ENCODE measurements at regions of chr13 and their contacts with region 1.

Region 1: GRCh38 chr13:73058736-73059459 is at the start of gene KLF5:
- DNase-seq: peak; percentile 99
- H3K4me3 Mint-ChIP-seq: peak within 1 kb of the TSS; percentile 83
- H3K27ac Mint-ChIP-seq: peak within 1 kb of the TSS; percentile 92
- H3K4me1 Mint-ChIP-seq: peaks cover 34% of the 10 kb centered on the region
- H3K27me3 Mint-ChIP-seq: no peaks in the 10 kb centered on the region
- CTCF ChIP-seq: no peak
- total RNA-seq, gene KLF5: 197 and 226 TPM in 2 replicates

Region 2: DNA sequence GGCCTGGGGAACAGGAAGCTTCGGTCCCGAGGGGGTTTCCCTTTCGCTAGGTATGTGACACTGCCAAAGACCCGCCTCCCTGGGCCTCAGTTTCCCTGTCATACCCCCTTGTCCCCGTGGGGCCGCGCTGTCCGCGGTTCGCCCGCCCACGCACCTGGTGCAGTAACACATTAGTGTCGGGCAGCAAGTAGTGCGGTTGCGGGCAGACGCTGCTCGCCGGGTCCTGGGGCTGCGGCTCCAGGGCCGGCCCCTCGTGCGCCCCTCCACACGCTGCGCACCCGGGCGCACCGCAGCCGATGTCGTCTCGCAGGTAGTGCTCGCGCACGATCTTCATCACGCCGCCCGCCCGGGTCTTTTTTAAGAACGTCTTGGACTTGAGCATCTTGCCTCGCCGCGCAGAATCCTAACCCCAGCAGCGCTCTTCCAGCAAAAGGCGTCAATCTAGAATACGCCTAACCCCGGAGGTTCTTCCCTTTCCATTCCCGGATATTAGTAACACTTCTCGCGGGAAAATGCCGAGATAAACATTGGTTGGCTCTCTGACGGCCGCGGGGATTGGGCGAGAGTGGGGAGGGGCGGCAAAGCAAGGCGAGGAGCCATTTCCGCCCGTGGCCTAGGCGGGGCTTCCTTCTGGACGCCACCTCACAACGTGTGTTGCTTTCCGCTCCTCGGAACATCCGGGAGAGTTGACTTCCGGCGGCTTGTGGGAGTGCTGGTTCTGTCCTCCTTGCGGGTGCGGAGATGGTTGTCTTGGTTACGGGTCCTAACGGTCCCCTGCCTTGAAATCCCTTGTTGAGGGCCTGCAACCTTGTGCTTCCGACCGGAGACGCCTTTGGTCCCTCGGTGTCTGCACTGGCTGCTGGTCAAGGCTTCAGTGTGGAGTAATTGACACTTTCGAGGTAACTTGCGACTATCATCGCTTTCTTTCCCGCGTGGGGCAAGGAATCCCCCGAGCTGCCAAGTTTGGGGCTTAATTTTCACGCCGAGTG is 277.2 kb before region 1 on chr13 and contains the starts of genes DIS3 and PIBF1:
- CTCF ChIA-PET with region 1: no interaction called
- POLR2A ChIA-PET with region 1: interaction called, 14 read pairs
- intact Hi-C with region 1: no loop called
- DNase-seq: peak; percentile 99
- H3K4me3 Mint-ChIP-seq: peak within 1 kb of the TSS; percentile 95
- H3K27ac Mint-ChIP-seq: peak within 1 kb of the TSS; percentile 98
- H3K4me1 Mint-ChIP-seq: peaks cover 30% of the 10 kb centered on the region
- H3K27me3 Mint-ChIP-seq: no peaks in the 10 kb centered on the region
- CTCF ChIP-seq: no peak
- total RNA-seq, gene DIS3: 41.3 and 44.4 TPM in 2 replicates
- total RNA-seq, gene PIBF1: 30.4 and 38.4 TPM in 2 replicates

Region 3: DNA sequence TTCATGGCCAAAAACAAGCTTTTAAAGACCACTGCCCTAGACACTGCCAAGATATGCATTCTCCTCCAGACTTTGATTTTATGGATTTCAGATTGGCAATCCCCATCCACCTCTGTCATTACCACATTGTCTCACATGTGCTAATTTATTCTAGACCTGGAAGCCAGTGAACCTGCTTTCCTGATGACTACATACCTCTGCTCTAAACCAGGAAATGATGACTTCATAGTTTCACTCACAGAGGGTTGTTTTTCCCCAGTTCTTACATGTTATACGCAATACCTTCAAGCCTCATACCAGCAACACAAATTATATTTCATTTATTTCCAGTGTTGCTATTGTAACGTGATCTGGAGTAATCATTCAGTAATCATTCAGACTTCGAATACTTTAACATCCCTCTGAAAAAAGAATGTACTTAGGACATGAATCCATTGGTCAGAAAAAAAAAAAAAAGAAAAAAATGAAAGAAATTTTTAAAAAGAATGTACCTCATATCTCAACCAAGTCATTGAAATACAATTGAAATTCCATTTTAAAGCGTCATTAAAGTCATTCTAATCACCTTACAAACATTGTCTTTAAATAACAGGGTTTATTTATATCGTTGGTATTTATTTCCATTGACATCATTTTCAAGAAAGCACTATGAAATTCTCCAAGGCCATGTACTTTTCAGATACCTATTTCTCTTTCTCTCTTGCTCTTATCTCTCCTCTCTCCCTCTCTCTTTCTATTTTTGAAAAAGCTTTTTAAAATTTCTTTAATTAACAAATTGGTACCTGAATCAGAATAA is 33.5 kb before region 1 on chr13:
- CTCF ChIA-PET with region 1: no interaction called
- POLR2A ChIA-PET with region 1: interaction called, 11 read pairs
- intact Hi-C with region 1: no loop called
- DNase-seq: peak; percentile 32
- H3K4me3 Mint-ChIP-seq: no peak overlapping the region
- H3K27ac Mint-ChIP-seq: no peak overlapping the region
- H3K4me1 Mint-ChIP-seq: no peaks in the 10 kb centered on the region
- H3K27me3 Mint-ChIP-seq: no peaks in the 10 kb centered on the region
- CTCF ChIP-seq: no peak

Region 4: DNA sequence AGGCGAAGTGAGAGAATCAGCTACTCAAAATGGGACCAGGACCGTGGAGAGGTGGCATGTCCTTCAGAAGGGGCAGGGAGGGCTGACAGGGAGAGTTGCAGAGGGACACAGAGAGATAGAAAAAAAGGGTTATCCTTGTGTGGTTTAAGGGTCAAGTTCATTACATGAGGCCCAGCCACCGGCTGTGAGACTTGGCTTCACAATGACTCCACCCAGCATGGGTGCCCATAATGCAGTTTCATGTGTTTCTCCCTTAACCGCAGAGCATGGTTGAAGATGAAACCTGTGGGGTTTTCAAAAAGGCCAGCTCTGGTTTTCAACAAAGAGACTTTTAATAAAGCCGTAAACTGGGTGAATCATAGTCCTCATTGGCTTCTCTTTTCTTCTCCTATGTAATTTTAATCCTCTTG is 164.5 kb after region 1 on chr13:
- CTCF ChIA-PET with region 1: interaction called, 5 read pairs
- POLR2A ChIA-PET with region 1: interaction called, 5 read pairs
- intact Hi-C with region 1: loop called (anchors 2 kb)
- DNase-seq: no peak
- H3K4me3 Mint-ChIP-seq: no peak overlapping the region
- H3K27ac Mint-ChIP-seq: peak overlapping the region; percentile 28
- H3K4me1 Mint-ChIP-seq: peaks cover 17% of the 10 kb centered on the region
- H3K27me3 Mint-ChIP-seq: no peaks in the 10 kb centered on the region
- CTCF ChIP-seq: no peak

Region 5: GRCh38 chr13:73335221-73335620 is 276.3 kb after region 1 on chr13:
- CTCF ChIA-PET with region 1: no interaction called
- POLR2A ChIA-PET with region 1: interaction called, 42 read pairs
- intact Hi-C with region 1: loop called (anchors 1 kb)
- DNase-seq: peak; percentile 89
- H3K4me3 Mint-ChIP-seq: peak overlapping the region; percentile 44
- H3K27ac Mint-ChIP-seq: peak overlapping the region; percentile 97
- H3K4me1 Mint-ChIP-seq: peaks cover 41% of the 10 kb centered on the region
- H3K27me3 Mint-ChIP-seq: no peaks in the 10 kb centered on the region
- CTCF ChIP-seq: no peak

Region 6: DNA sequence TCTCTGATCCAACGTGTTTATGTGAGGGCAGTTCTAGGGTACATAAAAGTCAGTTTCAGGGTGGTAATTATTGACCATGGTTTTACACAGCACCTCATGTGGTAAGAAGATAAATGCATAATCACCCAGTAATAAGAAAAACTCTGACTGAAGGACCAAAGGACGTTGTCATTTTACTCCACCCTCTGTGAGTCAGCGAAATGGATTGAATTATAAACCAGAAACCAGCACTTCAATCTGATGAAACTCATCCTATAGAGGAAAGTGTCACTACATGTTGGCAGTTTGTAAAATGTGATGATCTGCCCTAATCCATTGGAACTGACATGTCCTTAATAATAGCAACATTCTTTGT is 406.7 kb after region 1 on chr13:
- CTCF ChIA-PET with region 1: interaction called, 3 read pairs
- POLR2A ChIA-PET with region 1: interaction called, 30 read pairs
- intact Hi-C with region 1: no loop called
- DNase-seq: peak; percentile 76
- H3K4me3 Mint-ChIP-seq: no peak overlapping the region
- H3K27ac Mint-ChIP-seq: peak overlapping the region; percentile 90
- H3K4me1 Mint-ChIP-seq: peaks cover 15% of the 10 kb centered on the region
- H3K27me3 Mint-ChIP-seq: no peaks in the 10 kb centered on the region
- CTCF ChIP-seq: no peak